Body of pancreas (tissue), 4 donors: ENCODE measurements at regions of chr10 and their contacts with region 1.

Region 1: GRCh38 chr10:61188691-61189090 is 244.7 kb upstream of the RHOBTB1 start:
- DNase-seq: no peak
- ATAC-seq: no peak
- H3K4me3 ChIP-seq: no peak overlapping the region
- H3K27ac ChIP-seq: no peak overlapping the region
- H3K4me1 ChIP-seq: peaks cover 20% of the 10 kb centered on the region
- H3K27me3 ChIP-seq: no peaks in the 10 kb centered on the region
- CTCF ChIP-seq: no peak
- POLR2A ChIP-seq: no peak

Region 2: GRCh38 chr10:61135276-61135721 is 53.4 kb before region 1 on chr10:
- intact Hi-C with region 1: loop called (anchors 10 kb)
- DNase-seq: peak in 1 of 4 donors; percentile 10
- ATAC-seq: no peak
- H3K4me3 ChIP-seq: no peak overlapping the region
- H3K27ac ChIP-seq: no peak overlapping the region
- H3K4me1 ChIP-seq: peaks cover 8% of the 10 kb centered on the region
- H3K27me3 ChIP-seq: no peaks in the 10 kb centered on the region
- CTCF ChIP-seq: no peak
- POLR2A ChIP-seq: no peak

Region 3: DNA sequence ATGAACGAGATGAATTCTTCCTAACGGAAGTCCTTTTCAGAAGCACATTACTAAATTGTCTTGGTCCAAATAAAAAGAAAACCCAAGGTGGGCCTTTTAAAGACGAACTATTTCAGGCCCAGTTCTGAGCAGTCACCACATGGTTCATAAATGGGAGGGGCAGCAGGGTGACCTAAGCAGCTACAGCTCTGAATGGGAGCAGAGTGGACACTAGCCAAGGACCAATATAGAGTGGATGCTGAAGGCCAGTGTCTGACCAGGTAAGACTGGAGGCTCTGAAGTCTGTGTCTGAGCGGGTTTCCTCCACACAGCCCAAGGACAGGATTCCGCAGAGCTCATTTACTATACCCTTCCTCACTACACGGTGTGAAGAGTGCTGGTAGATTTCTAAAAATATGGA is 105.4 kb after region 1 on chr10:
- intact Hi-C with region 1: no loop called
- DNase-seq: no peak
- ATAC-seq: no peak
- H3K4me3 ChIP-seq: no peak overlapping the region
- H3K27ac ChIP-seq: no peak overlapping the region
- H3K4me1 ChIP-seq: no peaks in the 10 kb centered on the region
- H3K27me3 ChIP-seq: no peaks in the 10 kb centered on the region
- CTCF ChIP-seq: no peak
- POLR2A ChIP-seq: no peak